K562 (cell line): ENCODE measurements at regions of chr14 and their contacts with region 1.

Region 1: DNA sequence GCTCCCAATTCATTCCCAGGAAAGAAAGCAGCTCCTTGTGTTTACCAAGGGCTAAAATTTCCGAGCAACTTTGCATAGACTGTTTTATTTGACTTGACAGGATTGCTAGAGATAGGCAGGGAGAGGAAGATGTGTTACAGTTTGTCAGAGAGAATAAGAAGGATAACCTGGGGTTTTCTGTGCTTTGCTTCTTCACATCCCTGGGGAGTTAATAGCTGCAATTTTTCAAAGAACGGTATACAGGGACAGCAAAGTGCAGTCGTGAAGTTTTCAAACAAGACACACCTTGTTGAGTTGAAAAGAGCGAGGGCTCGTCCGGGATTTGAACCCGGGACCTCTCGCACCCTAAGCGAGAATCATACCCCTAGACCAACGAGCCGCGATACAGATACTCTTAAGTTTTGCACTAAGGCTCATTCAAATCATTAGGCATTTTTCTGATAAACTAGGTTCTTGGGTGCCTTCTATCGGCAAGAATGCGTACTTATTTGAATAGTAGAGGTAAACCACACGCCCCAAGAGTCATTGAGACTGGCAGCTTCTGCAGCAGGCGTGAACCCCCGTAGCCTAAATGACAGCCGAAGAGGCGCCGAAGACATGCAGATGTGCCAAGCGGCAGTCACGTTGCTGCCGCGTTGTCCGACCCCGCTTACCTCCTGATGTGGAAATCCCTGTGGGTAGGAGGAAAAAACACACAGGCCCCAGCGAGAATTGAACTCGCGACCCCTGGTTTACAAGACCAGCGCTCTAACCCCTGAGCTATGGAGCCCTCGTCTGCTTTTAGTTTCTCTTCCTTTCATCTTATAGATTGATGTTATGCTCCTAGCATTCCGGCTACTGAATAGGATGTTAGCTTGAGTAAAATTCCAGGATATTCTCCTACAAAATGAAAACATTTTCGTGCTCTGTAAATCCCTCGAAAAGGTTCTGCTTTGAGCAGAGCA is 22.2 kb upstream of the RNASE12 start:
- DNase-seq: peak; percentile 66 to 95 (median 71)
- ATAC-seq: peak; percentile 89
- H3K4me3 ChIP-seq: peak overlapping the region; percentile 62
- H3K27ac ChIP-seq: no peak overlapping the region
- H3K4me1 ChIP-seq: peaks cover 5 to 24% of the 10 kb centered on the region in 2 experiments; a peak in 3 of 5 replicates
- H3K27me3 ChIP-seq: no peaks in the 10 kb centered on the region
- CTCF ChIP-seq: peak; percentile 44 to 76 (median 58)
- EP300 ChIP-seq: peak; percentile 28
- POLR2A ChIP-seq: no peak
- RAD21 ChIP-seq: no peak; a peak in 1 of 4 replicates

Region 2: GRCh38 chr14:20327005-20327869 is 286.1 kb before region 1 on chr14:
- CTCF ChIA-PET with region 1: interaction called, 43 read pairs
- POLR2A ChIA-PET with region 1: interaction called, 3 read pairs
- in situ Hi-C with region 1: loop called (anchors 5 kb)
- intact Hi-C with region 1: loop called (anchors 1 kb)
- DNase-seq: peak in 2 of 4 experiments; percentile 27 to 72
- ATAC-seq: peak; percentile 34; the same call in 2 of the 3 replicates
- H3K4me3 ChIP-seq: no peak overlapping the region
- H3K27ac ChIP-seq: no peak overlapping the region
- H3K4me1 ChIP-seq: peaks cover 0 to 14% of the 10 kb centered on the region in 2 experiments; a peak in 2 of 5 replicates
- H3K27me3 ChIP-seq: no peaks in the 10 kb centered on the region
- CTCF ChIP-seq: peak; percentile 40 to 75 (median 47); a peak in 4 of 6 replicates
- EP300 ChIP-seq: no peak
- POLR2A ChIP-seq: no peak
- RAD21 ChIP-seq: peak; percentile 64 to 74

Region 3: GRCh38 chr14:20454516-20455354 is 158.6 kb before region 1 on chr14 and contains the starts of genes APEX1 and OSGEP:
- CTCF ChIA-PET with region 1: no interaction called
- POLR2A ChIA-PET with region 1: interaction called, 3 read pairs
- in situ Hi-C with region 1: no loop called
- intact Hi-C with region 1: loop called (anchors 5 kb)
- DNase-seq: peak; percentile 92 to 98 (median 96)
- ATAC-seq: peak; percentile 90
- H3K4me3 ChIP-seq: peak within 1 kb of the TSS; percentile 78
- H3K27ac ChIP-seq: peak within 1 kb of the TSS; percentile 99
- H3K4me1 ChIP-seq: peaks cover 15 to 18% of the 10 kb centered on the region in 2 experiments; a peak in 4 of 5 replicates
- H3K27me3 ChIP-seq: no peaks in the 10 kb centered on the region
- CTCF ChIP-seq: peak in 1 of 3 experiments; percentile 10; a peak in 1 of 6 replicates
- EP300 ChIP-seq: no peak
- POLR2A ChIP-seq: peak; percentile 87
- RAD21 ChIP-seq: no peak
- polyA plus RNA-seq, gene APEX1: 158 to 234 TPM
- polyA plus RNA-seq, gene OSGEP: 32.1 to 59.2 TPM

Region 4: GRCh38 chr14:20546877-20547276 is 66.5 kb before region 1 on chr14:
- CTCF ChIA-PET with region 1: no interaction called
- POLR2A ChIA-PET with region 1: no interaction called
- in situ Hi-C with region 1: no loop called
- intact Hi-C with region 1: loop called (anchors 5 kb)
- DNase-seq: peak in 2 of 4 experiments; percentile 8 to 12
- ATAC-seq: peak; percentile 79
- H3K4me3 ChIP-seq: no peak overlapping the region
- H3K27ac ChIP-seq: no peak overlapping the region
- H3K4me1 ChIP-seq: peaks cover 0 to 6% of the 10 kb centered on the region in 2 experiments; a peak in 3 of 5 replicates
- H3K27me3 ChIP-seq: no peaks in the 10 kb centered on the region
- CTCF ChIP-seq: no peak
- EP300 ChIP-seq: no peak
- POLR2A ChIP-seq: no peak
- RAD21 ChIP-seq: no peak

Region 5: GRCh38 chr14:20632682-20633428 is 19.5 kb after region 1 on chr14:
- CTCF ChIA-PET with region 1: interaction called, 3 read pairs
- POLR2A ChIA-PET with region 1: interaction called, 3 read pairs
- in situ Hi-C with region 1: no loop called
- intact Hi-C with region 1: loop called (anchors 1 kb)
- DNase-seq: peak; percentile 70 to 91 (median 82)
- ATAC-seq: peak; percentile 85
- H3K4me3 ChIP-seq: peak overlapping the region; percentile 40
- H3K27ac ChIP-seq: no peak overlapping the region
- H3K4me1 ChIP-seq: peaks cover 5 to 7% of the 10 kb centered on the region in 2 experiments; a peak in 4 of 5 replicates
- H3K27me3 ChIP-seq: peaks cover 4 to 5% of the 10 kb centered on the region in 2 experiments; a peak in 1 of 5 replicates
- CTCF ChIP-seq: no peak
- EP300 ChIP-seq: no peak
- POLR2A ChIP-seq: no peak
- RAD21 ChIP-seq: no peak

Region 6: GRCh38 chr14:20690848-20691523 is 77.6 kb after region 1 on chr14:
- CTCF ChIA-PET with region 1: interaction called, 49 read pairs
- POLR2A ChIA-PET with region 1: no interaction called
- in situ Hi-C with region 1: loop called (anchors 5 kb)
- intact Hi-C with region 1: loop called (anchors 1 kb)
- DNase-seq: peak; percentile 41 to 70 (median 52)
- ATAC-seq: peak; percentile 87
- H3K4me3 ChIP-seq: no peak overlapping the region
- H3K27ac ChIP-seq: no peak overlapping the region
- H3K4me1 ChIP-seq: no peaks in the 10 kb centered on the region; a peak in 1 of 5 replicates
- H3K27me3 ChIP-seq: no peaks in the 10 kb centered on the region
- CTCF ChIP-seq: peak; percentile 70 to 79 (median 70)
- EP300 ChIP-seq: no peak
- POLR2A ChIP-seq: no peak
- RAD21 ChIP-seq: peak; percentile 80 to 85